ENCODE measurements at regions of chr19 and their contacts with region 1.

Region 1: GRCh38 chr19:35899547-35900214 is 659 bp downstream of the NFKBID start:
- DNase-seq: peak; percentile 85
- H3K4me3 Mint-ChIP-seq: peak overlapping the region; percentile 97
- H3K27ac Mint-ChIP-seq: peak overlapping the region; percentile 98
- H3K4me1 Mint-ChIP-seq: peaks cover 42% of the 10 kb centered on the region
- H3K27me3 Mint-ChIP-seq: no peaks in the 10 kb centered on the region

Region 2: DNA sequence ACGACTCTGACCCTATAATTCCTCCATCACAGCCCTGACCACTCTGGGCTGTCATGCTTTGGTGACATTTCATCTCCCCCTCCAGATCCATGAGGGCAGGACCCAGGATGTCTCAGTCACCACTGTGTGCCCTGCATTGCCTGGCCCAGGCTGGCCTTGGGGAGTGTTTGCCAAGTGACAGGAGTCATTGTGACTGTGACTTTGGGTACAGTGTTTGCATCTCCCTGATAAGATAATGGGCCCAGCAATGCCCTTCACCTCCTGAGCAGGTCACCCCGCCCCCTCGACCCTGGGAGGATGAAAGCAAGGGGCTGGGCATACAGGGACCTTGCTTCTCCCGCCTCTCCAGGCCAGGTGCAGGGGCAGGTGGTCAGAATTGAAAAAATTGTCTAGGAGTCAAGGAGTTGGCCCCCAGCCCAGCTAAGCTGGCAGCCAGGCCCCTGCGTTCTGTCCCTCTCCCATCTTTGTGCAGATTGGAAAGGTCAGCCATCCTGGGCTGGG is 330.4 kb before region 1 on chr19:
- intact Hi-C with region 1: no loop called
- DNase-seq: no peak
- H3K4me3 Mint-ChIP-seq: no peak overlapping the region
- H3K27ac Mint-ChIP-seq: no peak overlapping the region
- H3K4me1 Mint-ChIP-seq: no peaks in the 10 kb centered on the region
- H3K27me3 Mint-ChIP-seq: peaks cover 13% of the 10 kb centered on the region

Region 3: GRCh38 chr19:35710784-35711723 is 188.6 kb before region 1 on chr19:
- intact Hi-C with region 1: loop called (anchors 1 kb)
- DNase-seq: peak; percentile 63
- H3K4me3 Mint-ChIP-seq: peak overlapping the region; percentile 63
- H3K27ac Mint-ChIP-seq: peak overlapping the region; percentile 95
- H3K4me1 Mint-ChIP-seq: peaks cover 46% of the 10 kb centered on the region
- H3K27me3 Mint-ChIP-seq: no peaks in the 10 kb centered on the region

Region 4: GRCh38 chr19:35869327-35870123 is 30.2 kb before region 1 on chr19:
- intact Hi-C with region 1: loop called (anchors 1 kb)
- DNase-seq: peak; percentile 85
- H3K4me3 Mint-ChIP-seq: peak overlapping the region; percentile 81
- H3K27ac Mint-ChIP-seq: peak overlapping the region; percentile 42
- H3K4me1 Mint-ChIP-seq: peaks cover 23% of the 10 kb centered on the region
- H3K27me3 Mint-ChIP-seq: peaks cover 26% of the 10 kb centered on the region

Region 5: DNA sequence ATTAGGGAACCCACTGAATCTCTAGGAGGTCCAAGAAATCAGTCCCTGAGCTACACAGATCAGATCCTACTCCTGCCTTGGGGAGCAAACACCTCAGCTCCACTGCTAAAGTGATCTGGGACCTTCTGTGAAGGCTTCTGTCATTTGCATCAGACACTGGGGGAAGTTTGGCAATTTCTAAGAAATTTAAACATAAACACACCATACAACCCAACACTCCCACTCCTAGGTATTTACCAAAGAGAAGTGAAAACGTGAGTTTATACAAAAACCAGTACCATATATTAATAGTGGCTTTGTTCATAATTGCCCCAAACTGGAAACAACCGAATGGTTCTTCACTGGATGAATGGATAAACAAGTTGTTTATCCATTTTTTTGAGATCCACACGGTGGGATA is 15.8 kb after region 1 on chr19:
- intact Hi-C with region 1: loop called (anchors 2 kb)
- DNase-seq: no peak
- H3K4me3 Mint-ChIP-seq: no peak overlapping the region
- H3K27ac Mint-ChIP-seq: no peak overlapping the region
- H3K4me1 Mint-ChIP-seq: no peaks in the 10 kb centered on the region
- H3K27me3 Mint-ChIP-seq: peaks cover 6% of the 10 kb centered on the region

Region 6: GRCh38 chr19:35937345-35938281 is 37.9 kb after region 1 on chr19:
- intact Hi-C with region 1: no loop called
- DNase-seq: no peak
- H3K4me3 Mint-ChIP-seq: peak overlapping the region; percentile 81
- H3K27ac Mint-ChIP-seq: peak overlapping the region; percentile 11
- H3K4me1 Mint-ChIP-seq: peaks cover 23% of the 10 kb centered on the region
- H3K27me3 Mint-ChIP-seq: no peaks in the 10 kb centered on the region

Region 7: DNA sequence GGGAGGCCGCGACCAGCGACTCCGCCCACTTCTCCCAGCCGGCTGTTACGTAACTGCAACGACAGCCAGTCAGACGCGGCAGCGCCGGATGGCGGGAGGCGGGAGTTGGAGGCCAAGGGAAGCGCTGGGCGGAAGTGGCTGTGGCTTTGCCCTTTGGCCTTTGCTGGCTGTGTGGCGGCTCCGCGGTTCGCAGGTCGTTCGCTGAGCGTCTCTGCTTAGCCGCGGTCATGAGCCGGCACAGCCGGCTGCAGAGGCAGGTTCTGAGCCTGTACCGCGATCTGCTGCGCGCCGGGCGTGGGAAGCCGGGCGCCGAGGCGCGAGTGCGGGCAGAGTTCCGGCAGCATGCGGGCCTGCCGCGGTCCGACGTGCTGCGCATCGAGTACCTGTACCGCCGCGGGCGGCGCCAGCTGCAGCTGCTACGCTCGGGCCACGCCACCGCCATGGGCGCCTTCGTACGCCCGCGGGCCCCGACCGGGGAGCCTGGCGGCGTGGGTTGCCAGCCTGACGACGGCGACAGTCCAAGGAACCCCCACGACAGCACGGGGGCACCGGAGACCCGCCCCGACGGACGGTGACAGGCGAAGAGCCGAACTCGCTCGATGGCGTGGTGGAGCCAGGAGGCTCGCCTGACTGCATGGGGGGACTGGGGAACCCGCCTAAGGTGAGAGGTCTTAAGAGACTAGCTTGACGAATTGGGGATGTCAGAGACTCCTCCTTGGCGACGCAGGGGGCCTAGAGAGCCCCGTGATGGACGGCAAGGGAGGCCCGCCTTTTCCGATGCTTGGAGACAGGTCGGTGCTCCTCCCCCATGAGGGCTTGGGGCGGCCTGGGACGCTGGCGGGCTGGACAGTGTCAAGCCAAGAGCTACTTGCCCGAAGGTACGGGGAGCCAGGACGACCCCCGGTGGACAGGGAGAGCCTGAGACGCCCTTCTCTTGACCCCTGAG is 95.6 kb after region 1 on chr19 and contains the start of gene SDHAF1:
- intact Hi-C with region 1: loop called (anchors 2 kb)
- DNase-seq: peak; percentile 93
- H3K4me3 Mint-ChIP-seq: peak within 1 kb of the TSS; percentile 94
- H3K27ac Mint-ChIP-seq: peak within 1 kb of the TSS; percentile 92
- H3K4me1 Mint-ChIP-seq: peaks cover 24% of the 10 kb centered on the region
- H3K27me3 Mint-ChIP-seq: peaks cover 3% of the 10 kb centered on the region
- total RNA-seq, gene SDHAF1: 21.2 and 24.5 TPM in 2 replicates

Region 8: GRCh38 chr19:36054119-36054732 is 154.5 kb after region 1 on chr19 and contains the start of gene THAP8:
- intact Hi-C with region 1: loop called (anchors 1 kb)
- DNase-seq: peak; percentile 100
- H3K4me3 Mint-ChIP-seq: peak within 1 kb of the TSS; percentile 99
- H3K27ac Mint-ChIP-seq: peak within 1 kb of the TSS; percentile 96
- H3K4me1 Mint-ChIP-seq: peaks cover 45% of the 10 kb centered on the region
- H3K27me3 Mint-ChIP-seq: no peaks in the 10 kb centered on the region
- total RNA-seq, gene THAP8: 1.6 TPM in 2 replicates

Measured in activated T-helper 1 cell treated with anti-CD3 and anti-CD28 coated beads, Interleukin-12 subunit alpha, Interleukin-12 subunit beta, Interleukin-2, Interleukin-4 antibody, amounts not matched to agents 30 ng/mL and 10 ng/mL and 1 ng/mL, durations not matched to agents 14 hours and 24 hours and 36 hours (primary cell).